Ovary (tissue), 10 donors: ENCODE measurements at regions of chr17 and their contacts with region 1.

Region 1: GRCh38 chr17:68457539-68458259 is 403 bp upstream of the WIPI1 start:
- DNase-seq: peak; percentile 99 to 100 (median 99)
- H3K4me3 ChIP-seq: peak overlapping the region; percentile 78
- H3K27ac ChIP-seq: peak overlapping the region in 1 of 2 donors; percentile 69
- H3K4me1 ChIP-seq: peaks cover 4% of the 10 kb centered on the region
- H3K27me3 ChIP-seq: no peaks in the 10 kb centered on the region
- CTCF ChIP-seq: peak in 1 of 3 donors; percentile 18
- EP300 ChIP-seq: peak; percentile 80
- POLR2A ChIP-seq: peak; percentile 75

Region 2: GRCh38 chr17:68172461-68172954 is 285.2 kb before region 1 on chr17:
- intact Hi-C with region 1: loop called in 1 of 4 experiments (anchors 2 kb)
- DNase-seq: peak; percentile 55 to 79 (median 75)
- H3K4me3 ChIP-seq: no peak overlapping the region
- H3K27ac ChIP-seq: no peak overlapping the region
- H3K4me1 ChIP-seq: peaks cover 3% of the 10 kb centered on the region
- H3K27me3 ChIP-seq: no peaks in the 10 kb centered on the region
- CTCF ChIP-seq: peak; percentile 81 to 88 (median 83)
- EP300 ChIP-seq: no peak
- POLR2A ChIP-seq: no peak

Region 3: DNA sequence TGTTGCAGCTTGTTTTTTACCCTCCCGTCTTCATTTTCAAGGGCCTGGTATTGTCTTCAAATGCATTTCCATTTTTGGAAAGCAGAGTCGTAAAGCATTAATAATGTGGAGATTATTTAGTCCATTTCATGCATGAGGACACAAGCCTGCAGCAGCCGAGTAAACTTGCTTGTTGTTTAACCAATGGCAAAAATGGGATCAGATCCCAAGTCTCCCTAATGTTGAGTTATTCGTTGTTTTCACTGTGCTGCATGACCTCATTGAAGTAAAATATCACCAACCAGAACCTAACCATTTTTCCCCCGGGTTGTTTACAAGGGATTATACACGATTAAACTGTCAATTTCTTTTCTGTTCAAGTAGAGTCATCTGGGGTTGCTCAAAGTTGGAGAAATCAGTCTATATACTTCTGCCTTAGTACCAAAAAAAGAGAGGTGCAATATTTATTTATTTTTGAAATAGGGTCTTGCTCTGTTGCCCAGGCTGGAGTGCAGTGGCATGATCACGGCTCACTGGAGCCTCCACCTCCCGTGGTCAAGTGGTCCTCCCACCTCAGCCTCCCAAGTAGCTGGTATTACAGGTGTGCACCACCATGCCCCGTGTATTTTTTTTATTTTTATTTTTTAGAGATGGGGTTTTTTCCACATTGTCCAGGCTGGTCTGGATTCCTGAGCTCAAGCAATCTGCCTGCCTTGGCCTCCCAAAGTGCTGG is 197.5 kb before region 1 on chr17:
- intact Hi-C with region 1: loop called in 2 of 4 experiments (anchors 2 to 5 kb)
- DNase-seq: no peak
- H3K4me3 ChIP-seq: no peak overlapping the region
- H3K27ac ChIP-seq: no peak overlapping the region
- H3K4me1 ChIP-seq: no peaks in the 10 kb centered on the region
- H3K27me3 ChIP-seq: no peaks in the 10 kb centered on the region
- CTCF ChIP-seq: no peak
- EP300 ChIP-seq: no peak
- POLR2A ChIP-seq: no peak

Region 4: GRCh38 chr17:68273722-68274121 is 184.0 kb before region 1 on chr17:
- intact Hi-C with region 1: no loop called
- DNase-seq: no peak
- H3K4me3 ChIP-seq: no peak overlapping the region
- H3K27ac ChIP-seq: no peak overlapping the region
- H3K4me1 ChIP-seq: no peaks in the 10 kb centered on the region
- H3K27me3 ChIP-seq: no peaks in the 10 kb centered on the region
- CTCF ChIP-seq: no peak
- EP300 ChIP-seq: no peak
- POLR2A ChIP-seq: no peak

Region 5: GRCh38 chr17:68512247-68512982 is 54.7 kb after region 1 on chr17 and contains the start of gene PRKAR1A:
- intact Hi-C with region 1: loop called in 1 of 4 experiments (anchors 5 kb)
- DNase-seq: peak; percentile 96 to 97 (median 97)
- H3K4me3 ChIP-seq: peak within 1 kb of the TSS; percentile 87
- H3K27ac ChIP-seq: peak within 1 kb of the TSS; percentile 92 to 99
- H3K4me1 ChIP-seq: peaks cover 5% of the 10 kb centered on the region
- H3K27me3 ChIP-seq: no peaks in the 10 kb centered on the region
- CTCF ChIP-seq: peak in 2 of 3 donors; percentile 32 to 34
- EP300 ChIP-seq: peak; percentile 18
- POLR2A ChIP-seq: peak; percentile 97
- total RNA-seq, gene PRKAR1A: 221 to 453 (median 375) TPM

Region 6: GRCh38 chr17:68591583-68591982 is 133.9 kb after region 1 on chr17:
- intact Hi-C with region 1: loop called in 1 of 4 experiments (anchors 10 kb)
- DNase-seq: peak; percentile 40 to 81 (median 67)
- H3K4me3 ChIP-seq: no peak overlapping the region
- H3K27ac ChIP-seq: no peak overlapping the region
- H3K4me1 ChIP-seq: peaks cover 2% of the 10 kb centered on the region
- H3K27me3 ChIP-seq: no peaks in the 10 kb centered on the region
- CTCF ChIP-seq: no peak
- EP300 ChIP-seq: no peak
- POLR2A ChIP-seq: no peak

Region 7: GRCh38 chr17:68759343-68760132 is 301.8 kb after region 1 on chr17:
- intact Hi-C with region 1: loop called in 1 of 4 experiments (anchors 10 kb)
- DNase-seq: peak; percentile 86 to 94 (median 89)
- H3K4me3 ChIP-seq: peak overlapping the region; percentile 14
- H3K27ac ChIP-seq: peak overlapping the region in 1 of 2 donors; percentile 73
- H3K4me1 ChIP-seq: peaks cover 2% of the 10 kb centered on the region
- H3K27me3 ChIP-seq: no peaks in the 10 kb centered on the region
- CTCF ChIP-seq: peak; percentile 48 to 94 (median 92)
- EP300 ChIP-seq: no peak
- POLR2A ChIP-seq: no peak